Posterior vena cava (tissue), 2 donors: ENCODE measurements at regions of chr18 and their contacts with region 1.

Region 1: GRCh38 chr18:75198036-75198435 is 10.9 kb downstream of the PTGR3 start:
- DNase-seq: no peak

Region 2: DNA sequence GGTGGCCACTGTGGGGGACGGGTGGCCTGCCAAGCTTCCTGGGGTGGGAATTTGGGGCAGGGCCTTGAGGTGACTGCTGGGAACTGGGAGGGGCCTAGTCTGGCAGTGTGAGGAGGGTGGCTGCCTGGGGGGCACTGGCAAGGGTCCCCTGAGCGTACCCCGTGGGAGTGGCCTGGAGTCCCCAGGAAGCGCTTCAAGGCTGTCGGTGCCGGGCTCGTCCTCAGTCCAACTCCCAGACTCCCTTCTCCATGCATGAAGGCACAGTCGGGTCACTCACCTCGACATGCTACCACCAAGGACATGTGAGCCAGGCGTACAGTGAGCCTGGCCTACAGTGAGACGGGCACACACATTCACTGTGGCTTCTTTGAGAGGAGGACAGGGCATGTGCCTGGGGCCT is 124.2 kb after region 1 on chr18:
- intact Hi-C with region 1: loop called in 1 of 2 experiments (anchors 10 kb)
- DNase-seq: no peak